Dendritic cell treated with granulocyte-macrophage colony-stimulating factor and Interleukin-4, amounts not matched to agents 40 ng/mL and 50 ng/mL, for 4 days (primary cell): ENCODE measurements at regions of chr11 and their contacts with region 1.

Region 1: DNA sequence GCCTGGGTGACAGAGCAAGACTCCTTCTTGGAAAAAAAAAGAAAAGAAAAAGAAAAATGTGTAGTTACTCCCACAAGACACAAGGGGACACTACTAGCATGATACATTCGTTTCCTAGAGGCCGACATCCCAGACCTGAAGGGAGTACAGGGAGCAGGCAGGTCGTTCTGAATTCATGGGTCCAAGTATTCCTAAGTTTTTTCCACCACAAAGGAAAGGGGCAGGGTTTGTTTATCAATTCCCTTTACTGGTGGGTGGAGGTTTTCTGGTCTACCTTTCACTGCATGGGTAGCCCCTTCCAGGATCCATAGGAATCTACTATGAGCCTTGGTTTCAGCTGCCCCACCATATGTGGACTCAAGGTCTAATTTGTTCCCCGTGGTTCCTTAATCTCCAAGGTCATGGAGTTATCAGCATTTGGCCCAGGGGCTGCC is 11.8 kb downstream of the TIGD3 start:
- H3K4me3 Mint-ChIP-seq: no peak overlapping the region
- H3K27ac Mint-ChIP-seq: no peak overlapping the region
- H3K4me1 Mint-ChIP-seq: peaks cover 36% of the 10 kb centered on the region
- H3K27me3 Mint-ChIP-seq: peaks cover 3% of the 10 kb centered on the region

Region 2: DNA sequence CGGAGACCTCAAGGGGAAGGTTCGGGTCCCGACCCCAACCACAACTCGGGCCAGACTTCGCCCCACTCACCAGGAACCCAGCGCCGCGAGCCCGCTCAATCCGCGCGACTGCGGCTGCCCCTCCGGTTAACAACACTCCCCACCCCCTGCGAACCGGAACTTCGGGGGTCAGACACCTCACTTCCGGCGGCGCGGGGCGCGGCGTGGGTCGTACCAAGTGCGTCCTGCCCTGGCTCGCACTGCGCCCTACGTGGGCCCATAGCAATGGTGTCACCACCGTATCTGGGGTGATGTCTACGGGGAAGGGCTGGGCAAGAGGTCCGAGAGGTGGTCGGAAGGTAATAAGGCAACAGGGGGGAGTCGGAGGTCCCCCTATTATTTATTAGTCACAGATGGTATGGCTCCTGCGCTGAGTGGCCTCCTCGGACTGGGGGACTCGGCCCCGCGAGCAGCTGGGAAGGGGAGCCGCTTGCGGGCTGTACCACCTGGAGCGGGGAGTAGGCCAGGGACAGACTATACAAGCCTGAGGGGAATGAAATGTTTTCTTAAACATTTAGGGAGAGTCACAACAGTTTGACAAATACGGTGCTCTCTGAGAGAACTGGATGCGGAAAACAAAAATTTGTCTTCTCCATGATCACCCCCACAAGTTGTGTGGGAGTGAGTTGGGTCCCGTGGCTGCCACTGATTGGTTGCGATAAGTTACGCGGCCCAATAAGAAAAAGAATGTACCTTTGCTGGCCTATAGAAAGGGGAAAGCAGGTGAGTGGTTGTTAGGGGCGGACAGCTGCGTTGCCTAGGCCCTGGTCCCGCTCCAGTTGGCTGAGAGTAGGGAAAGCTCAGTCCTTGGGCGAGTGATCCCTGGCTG is 231.7 kb before region 1 on chr11 and contains the start of gene SYVN1:
- intact Hi-C with region 1: no loop called
- H3K4me3 Mint-ChIP-seq: peak within 1 kb of the TSS; percentile 89
- H3K27ac Mint-ChIP-seq: peak within 1 kb of the TSS; percentile 99
- H3K4me1 Mint-ChIP-seq: peaks cover 32% of the 10 kb centered on the region
- H3K27me3 Mint-ChIP-seq: no peaks in the 10 kb centered on the region

Region 3: GRCh38 chr11:65418711-65419459 is 52.5 kb after region 1 on chr11:
- intact Hi-C with region 1: loop called (anchors 10 kb)
- H3K4me3 Mint-ChIP-seq: peak overlapping the region; percentile 78
- H3K27ac Mint-ChIP-seq: peak overlapping the region; percentile 100
- H3K4me1 Mint-ChIP-seq: peaks cover 67% of the 10 kb centered on the region
- H3K27me3 Mint-ChIP-seq: no peaks in the 10 kb centered on the region

Region 4: DNA sequence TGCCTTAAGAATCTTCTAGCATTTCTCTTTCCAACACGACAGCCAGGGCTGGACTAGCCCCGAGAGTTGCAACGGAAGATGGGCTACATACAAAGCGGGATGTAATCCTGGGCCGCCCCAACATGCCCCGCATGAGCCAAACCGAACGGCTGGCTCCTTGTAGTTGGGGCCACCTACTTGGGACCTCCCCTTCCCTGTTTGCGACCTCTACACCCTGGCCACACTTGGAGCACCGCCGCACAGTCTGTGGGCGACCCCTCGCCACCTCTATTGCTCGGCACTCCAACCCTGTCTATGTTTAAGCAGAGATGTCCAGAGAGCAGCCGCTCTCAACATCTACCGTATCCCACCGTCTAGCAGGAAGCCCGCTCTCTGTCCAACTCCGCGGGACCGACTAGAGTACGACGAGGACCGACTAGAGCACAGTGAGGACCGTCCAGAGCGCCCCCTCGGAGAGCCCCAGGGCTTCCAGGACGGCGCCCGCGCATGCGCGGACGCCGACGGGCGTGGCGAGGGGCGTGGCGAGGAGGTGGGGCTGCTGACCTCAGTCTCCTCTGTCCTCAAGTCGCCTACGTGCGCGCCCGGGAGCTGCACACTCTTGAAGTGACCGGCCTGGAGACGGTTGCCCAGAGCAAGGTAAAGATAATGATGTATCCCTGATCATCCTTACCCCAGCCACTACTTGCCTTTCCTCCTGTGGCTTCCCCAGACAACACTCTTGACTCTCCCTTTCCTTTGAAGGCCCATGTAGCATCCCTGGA is 88.5 kb after region 1 on chr11:
- intact Hi-C with region 1: loop called (anchors 10 kb)
- H3K4me3 Mint-ChIP-seq: peak overlapping the region; percentile 97
- H3K27ac Mint-ChIP-seq: peak overlapping the region; percentile 92
- H3K4me1 Mint-ChIP-seq: peaks cover 43% of the 10 kb centered on the region
- H3K27me3 Mint-ChIP-seq: peaks cover 2% of the 10 kb centered on the region

Region 5: DNA sequence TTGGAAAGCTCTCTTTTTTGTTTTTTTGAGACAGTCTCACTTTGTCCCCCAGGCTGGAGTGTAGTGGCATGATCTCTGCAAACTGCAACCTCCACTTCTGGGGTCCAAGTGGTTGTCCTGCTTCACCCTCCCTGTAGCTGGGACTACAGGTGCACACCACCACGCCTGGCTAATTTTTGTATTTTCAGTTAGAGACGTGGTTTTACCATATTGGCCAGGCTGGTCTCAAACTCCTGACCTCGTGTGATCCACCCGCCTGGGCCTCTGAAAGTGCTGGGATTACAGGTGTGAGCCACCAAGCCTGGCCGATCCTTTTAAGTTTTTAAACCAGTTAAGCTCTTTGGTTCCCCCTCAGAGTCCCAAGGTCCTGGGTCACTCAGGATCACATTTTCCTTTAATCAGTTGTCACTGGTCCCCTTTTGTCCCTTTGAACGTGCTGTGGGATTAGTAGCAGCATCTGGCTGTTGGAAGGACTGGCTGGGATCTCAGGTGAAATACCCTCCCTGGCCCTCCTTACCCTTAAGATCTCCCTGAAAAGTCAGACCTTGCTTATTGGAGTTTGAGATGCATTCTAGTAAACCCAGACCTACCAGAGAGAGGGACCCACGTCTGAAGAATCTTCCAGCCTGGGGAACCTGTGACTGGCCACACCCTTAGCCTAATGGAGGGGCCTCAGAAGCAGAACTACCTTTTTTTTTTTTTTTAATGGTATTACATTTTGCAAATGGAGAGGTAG is 140.6 kb after region 1 on chr11:
- intact Hi-C with region 1: loop called (anchors 1 kb)
- H3K4me3 Mint-ChIP-seq: no peak overlapping the region
- H3K27ac Mint-ChIP-seq: no peak overlapping the region
- H3K4me1 Mint-ChIP-seq: peaks cover 63% of the 10 kb centered on the region
- H3K27me3 Mint-ChIP-seq: no peaks in the 10 kb centered on the region